H1 (cell line): ENCODE measurements at regions of chr4 and their contacts with region 1.

Region 1: DNA sequence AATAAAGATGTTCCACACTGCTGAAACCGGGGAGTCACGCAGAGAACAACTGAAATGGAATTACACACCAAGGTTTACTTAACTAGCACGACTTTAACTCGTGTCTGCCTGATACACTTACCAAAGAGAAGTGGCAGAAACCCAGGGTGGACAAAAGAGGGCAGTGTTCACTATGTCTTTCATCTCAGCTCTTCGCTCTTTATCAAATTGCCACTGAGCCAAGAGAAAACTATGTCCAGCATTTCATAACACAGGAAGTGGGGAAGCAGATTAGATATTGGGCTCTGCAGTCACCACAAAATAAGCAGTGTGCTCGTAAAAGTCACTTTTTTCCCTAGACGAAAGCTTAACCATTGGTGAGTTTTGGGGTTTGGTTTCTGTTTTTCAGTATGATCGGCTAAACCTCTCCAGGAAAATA is 155.7 kb downstream of the CHIC2 start:
- DNase-seq: no peak
- H3K4me3 ChIP-seq: no peak overlapping the region
- H3K27ac ChIP-seq: no peak overlapping the region
- H3K4me1 ChIP-seq: peaks cover 0 to 7% (median 3%) of the 10 kb centered on the region in 4 experiments; a peak in 3 of 7 replicates
- H3K27me3 ChIP-seq: no peaks in the 10 kb centered on the region; a peak in 2 of 7 replicates
- CTCF ChIP-seq: peak in 2 of 3 experiments; percentile 55 to 76; a peak in 3 of 4 replicates
- EP300 ChIP-seq: no peak
- POLR2A ChIP-seq: no peak
- RAD21 ChIP-seq: peak; percentile 83 to 85

Region 2: GRCh38 chr4:53920116-53920515 is 11.4 kb after region 1 on chr4:
- CTCF ChIA-PET with region 1: interaction called, 22 read pairs
- POLR2A ChIA-PET with region 1: interaction called, 3 read pairs
- DNase-seq: no peak
- H3K4me3 ChIP-seq: no peak overlapping the region
- H3K27ac ChIP-seq: no peak overlapping the region
- H3K4me1 ChIP-seq: peaks cover 0 to 15% (median under 1%) of the 10 kb centered on the region in 4 experiments; a peak in 4 of 7 replicates
- H3K27me3 ChIP-seq: no peaks in the 10 kb centered on the region
- CTCF ChIP-seq: no peak
- EP300 ChIP-seq: no peak
- POLR2A ChIP-seq: no peak
- RAD21 ChIP-seq: no peak

Region 3: DNA sequence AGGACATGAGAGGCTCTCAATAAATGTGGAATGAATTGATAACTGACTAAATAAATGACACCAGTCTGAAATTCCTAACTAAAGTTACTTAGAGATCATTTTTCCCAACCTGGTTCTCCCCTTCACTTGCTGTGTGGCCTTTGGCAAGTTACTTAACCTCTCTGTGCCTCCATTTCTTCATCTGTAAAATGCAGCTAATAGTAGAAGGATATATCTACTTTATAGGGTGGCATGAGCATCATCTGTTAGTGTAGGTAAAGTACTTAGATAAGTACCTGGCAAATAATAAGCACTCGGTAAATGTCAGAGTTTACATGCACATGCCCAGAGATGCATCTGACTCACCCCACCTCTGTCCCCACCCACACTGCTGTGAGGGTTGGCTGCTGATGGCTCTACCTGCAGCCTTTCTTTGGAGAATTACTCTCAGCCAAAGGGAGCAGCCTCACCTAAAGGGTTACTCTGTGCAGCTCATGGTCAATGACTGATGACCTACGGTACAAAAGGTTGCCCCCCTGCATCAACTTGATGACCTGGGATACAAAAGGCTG is 16.5 kb after region 1 on chr4:
- CTCF ChIA-PET with region 1: interaction called, 53 read pairs
- POLR2A ChIA-PET with region 1: interaction called, 3 read pairs
- DNase-seq: no peak
- H3K4me3 ChIP-seq: no peak overlapping the region
- H3K27ac ChIP-seq: no peak overlapping the region
- H3K4me1 ChIP-seq: peaks cover 0 to 13% (median under 1%) of the 10 kb centered on the region in 4 experiments; a peak in 4 of 7 replicates
- H3K27me3 ChIP-seq: no peaks in the 10 kb centered on the region
- CTCF ChIP-seq: no peak
- EP300 ChIP-seq: no peak
- POLR2A ChIP-seq: no peak
- RAD21 ChIP-seq: no peak

Region 4: DNA sequence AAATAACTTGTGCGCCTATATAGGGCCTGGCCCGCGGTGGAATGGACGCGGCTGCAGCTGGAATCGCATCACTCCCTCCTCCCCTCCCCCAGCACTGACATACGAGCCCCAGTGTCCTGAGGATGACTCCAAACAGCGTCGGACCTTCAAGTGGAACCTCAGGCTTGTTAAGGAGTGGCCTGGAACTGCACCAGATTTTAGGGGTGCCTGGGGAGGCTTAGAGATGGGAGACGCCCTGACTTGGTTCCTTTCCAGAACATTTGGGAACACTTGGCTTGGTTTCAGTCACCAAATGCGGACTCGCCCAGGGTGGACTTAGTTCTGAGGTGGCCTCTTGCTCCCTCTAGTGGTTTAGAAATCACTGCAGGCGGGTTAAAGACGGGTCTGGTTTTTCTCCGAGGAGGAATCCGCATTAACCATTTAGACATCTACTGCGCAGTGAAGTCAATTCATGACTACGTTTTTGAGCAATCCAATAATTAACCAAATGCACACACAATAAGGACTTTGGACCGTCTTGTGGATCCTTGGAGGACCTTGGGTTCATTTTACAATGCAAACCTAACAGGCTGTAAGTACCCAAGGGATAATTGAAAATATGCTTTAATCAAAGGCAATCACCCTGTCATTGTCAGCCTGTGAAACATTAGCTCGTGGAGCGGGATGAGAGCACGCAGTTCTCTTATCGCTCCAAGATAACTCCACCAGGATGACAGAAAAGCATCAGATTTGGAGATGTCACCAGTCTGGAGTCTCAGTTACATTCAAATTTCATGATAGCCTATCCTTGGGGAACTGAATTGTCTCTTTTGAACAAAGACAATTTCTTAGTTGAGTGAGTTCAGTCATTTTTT is 309.2 kb after region 1 on chr4:
- CTCF ChIA-PET with region 1: interaction called, 48 read pairs
- POLR2A ChIA-PET with region 1: interaction called, 3 read pairs
- DNase-seq: peak in 1 of 2 experiments; percentile 81
- H3K4me3 ChIP-seq: peak overlapping the region; percentile 12 to 59 (median 42); a peak in 6 of 8 replicates
- H3K27ac ChIP-seq: no peak overlapping the region
- H3K4me1 ChIP-seq: no peaks in the 10 kb centered on the region
- H3K27me3 ChIP-seq: peaks cover 0 to 34% (median 18%) of the 10 kb centered on the region in 4 experiments; a peak in 6 of 7 replicates
- CTCF ChIP-seq: peak; percentile 58 to 86 (median 83)
- EP300 ChIP-seq: no peak
- POLR2A ChIP-seq: no peak
- RAD21 ChIP-seq: peak; percentile 90 to 93

Region 5: GRCh38 chr4:54228056-54228527 is 319.4 kb after region 1 on chr4:
- CTCF ChIA-PET with region 1: interaction called, 65 read pairs
- POLR2A ChIA-PET with region 1: no interaction called
- DNase-seq: peak in 1 of 2 experiments; percentile 93
- H3K4me3 ChIP-seq: peak overlapping the region; percentile 32 to 85 (median 50); a peak in 7 of 8 replicates
- H3K27ac ChIP-seq: no peak overlapping the region
- H3K4me1 ChIP-seq: peaks cover 0 to 34% (median 23%) of the 10 kb centered on the region in 4 experiments; a peak in 6 of 7 replicates
- H3K27me3 ChIP-seq: peaks cover 67 to 97% (median 94%) of the 10 kb centered on the region in 4 experiments
- CTCF ChIP-seq: peak in 2 of 3 experiments; percentile 77 to 93; a peak in 3 of 4 replicates
- EP300 ChIP-seq: peak in 1 of 2 experiments; percentile 52; a peak in 1 of 3 replicates
- POLR2A ChIP-seq: no peak
- RAD21 ChIP-seq: peak; percentile 95 to 97